CD4-positive, alpha-beta T cell (primary cell): ENCODE measurements at regions of chr2 and their contacts with region 1.

Region 1: DNA sequence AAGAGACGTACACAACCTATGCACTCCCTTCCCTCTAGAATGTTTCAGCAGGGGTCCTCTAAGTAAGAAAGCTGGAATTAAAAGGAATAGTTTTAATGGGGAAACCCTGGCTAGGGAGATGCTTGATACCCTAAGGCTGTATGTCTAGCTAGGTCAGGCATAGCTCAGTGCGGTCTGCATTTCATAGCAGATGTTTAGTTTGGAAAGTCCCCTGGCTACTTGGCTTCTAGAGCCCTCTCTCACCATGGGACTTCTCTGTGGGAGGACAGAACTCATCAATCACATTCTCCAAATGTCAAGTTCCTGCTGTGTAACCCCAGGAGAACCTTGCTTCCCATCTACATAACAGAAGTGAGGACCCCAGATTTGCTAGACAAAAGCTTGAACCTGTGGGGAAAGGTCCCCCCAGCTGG is 24.1 kb upstream of the ANXA4 start:
- DNase-seq: no peak
- ATAC-seq: no peak
- H3K4me3 ChIP-seq: no peak overlapping the region
- H3K4me3 Mint-ChIP-seq: no peak overlapping the region
- H3K27ac ChIP-seq: no peak overlapping the region
- H3K27ac Mint-ChIP-seq: no peak overlapping the region
- H3K4me1 ChIP-seq: peaks cover 13% of the 10 kb centered on the region
- H3K4me1 Mint-ChIP-seq: peaks cover 17% of the 10 kb centered on the region
- H3K27me3 ChIP-seq: no peaks in the 10 kb centered on the region
- H3K27me3 Mint-ChIP-seq: no peaks in the 10 kb centered on the region
- CTCF ChIP-seq: no peak

Region 2: GRCh38 chr2:69677914-69678313 is 40.0 kb before region 1 on chr2:
- CTCF ChIA-PET with region 1: no interaction called
- POLR2A ChIA-PET with region 1: no interaction called
- intact Hi-C with region 1: loop called in 1 of 2 experiments (anchors 5 kb)
- DNase-seq: no peak
- ATAC-seq: no peak
- H3K4me3 ChIP-seq: no peak overlapping the region
- H3K4me3 Mint-ChIP-seq: no peak overlapping the region
- H3K27ac ChIP-seq: no peak overlapping the region
- H3K27ac Mint-ChIP-seq: no peak overlapping the region
- H3K4me1 ChIP-seq: peaks cover 3% of the 10 kb centered on the region
- H3K4me1 Mint-ChIP-seq: peaks cover 33% of the 10 kb centered on the region
- H3K27me3 ChIP-seq: no peaks in the 10 kb centered on the region
- H3K27me3 Mint-ChIP-seq: no peaks in the 10 kb centered on the region
- CTCF ChIP-seq: no peak